GM12878 (cell line): ENCODE measurements at regions of chr5 and their contacts with region 1.

Region 1: DNA sequence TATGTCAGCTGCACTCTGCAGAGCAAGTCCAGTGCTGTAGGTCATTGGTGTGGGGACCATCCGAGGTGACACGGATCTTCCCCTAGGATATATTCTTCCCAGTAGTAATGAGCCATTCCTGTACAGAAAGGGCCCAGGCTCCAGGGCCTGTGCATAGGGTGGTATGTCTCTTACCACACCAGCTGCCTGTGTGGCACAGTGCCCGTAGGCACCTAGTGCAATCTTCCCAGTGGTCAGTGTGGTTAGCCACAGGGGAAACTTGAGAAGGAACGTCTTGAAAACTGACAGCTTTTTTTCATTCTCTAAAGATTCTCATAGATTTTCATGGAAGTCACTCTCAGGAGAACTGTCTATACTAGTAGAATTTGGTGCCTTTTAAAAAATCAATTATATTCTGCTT is 39.8 kb downstream of the CYSTM1 start:
- DNase-seq: no peak
- ATAC-seq: peak; percentile 61
- H3K4me3 ChIP-seq: no peak overlapping the region
- H3K27ac ChIP-seq: no peak overlapping the region
- H3K4me1 ChIP-seq: peaks cover 8% of the 10 kb centered on the region
- H3K27me3 ChIP-seq: no peaks in the 10 kb centered on the region
- CTCF ChIP-seq: no peak
- EP300 ChIP-seq: no peak
- POLR2A ChIP-seq: no peak
- RAD21 ChIP-seq: no peak

Region 2: GRCh38 chr5:139925650-139926640 is 288.9 kb before region 1 on chr5:
- CTCF ChIA-PET with region 1: no interaction called
- POLR2A ChIA-PET with region 1: no interaction called
- RAD21 ChIA-PET with region 1: no interaction called
- SMC1A ChIA-PET with region 1: no interaction called
- in situ Hi-C with region 1: no loop called
- intact Hi-C with region 1: no loop called
- DNase-seq: no peak
- ATAC-seq: peak; percentile 54
- H3K4me3 ChIP-seq: no peak overlapping the region
- H3K27ac ChIP-seq: no peak overlapping the region
- H3K4me1 ChIP-seq: 0 out of 2 replicates have a peak, but pooled peaks cover 6% of the 10 kb centered on the region
- H3K27me3 ChIP-seq: no peaks in the 10 kb centered on the region
- CTCF ChIP-seq: no peak
- EP300 ChIP-seq: no peak
- POLR2A ChIP-seq: no peak
- RAD21 ChIP-seq: no peak

Region 3: GRCh38 chr5:139946440-139946839 is 268.4 kb before region 1 on chr5:
- CTCF ChIA-PET with region 1: no interaction called
- POLR2A ChIA-PET with region 1: no interaction called
- RAD21 ChIA-PET with region 1: no interaction called
- SMC1A ChIA-PET with region 1: no interaction called
- in situ Hi-C with region 1: no loop called
- intact Hi-C with region 1: no loop called
- DNase-seq: no peak
- ATAC-seq: peak; percentile 67
- H3K4me3 ChIP-seq: no peak overlapping the region
- H3K27ac ChIP-seq: no peak overlapping the region
- H3K4me1 ChIP-seq: peaks cover 14% of the 10 kb centered on the region
- H3K27me3 ChIP-seq: no peaks in the 10 kb centered on the region
- CTCF ChIP-seq: no peak
- EP300 ChIP-seq: no peak
- POLR2A ChIP-seq: no peak
- RAD21 ChIP-seq: no peak

Region 4: GRCh38 chr5:140182075-140182709 is 32.6 kb before region 1 on chr5:
- CTCF ChIA-PET with region 1: interaction called, 4 read pairs
- POLR2A ChIA-PET with region 1: interaction called, 3 read pairs
- RAD21 ChIA-PET with region 1: interaction called, 3 read pairs
- SMC1A ChIA-PET with region 1: interaction called, 11 read pairs
- in situ Hi-C with region 1: no loop called
- intact Hi-C with region 1: no loop called
- DNase-seq: no peak
- ATAC-seq: peak; percentile 38
- H3K4me3 ChIP-seq: no peak overlapping the region
- H3K27ac ChIP-seq: no peak overlapping the region
- H3K4me1 ChIP-seq: peaks cover 18% of the 10 kb centered on the region
- H3K27me3 ChIP-seq: no peaks in the 10 kb centered on the region
- CTCF ChIP-seq: no peak
- EP300 ChIP-seq: no peak
- POLR2A ChIP-seq: no peak
- RAD21 ChIP-seq: no peak

Region 5: DNA sequence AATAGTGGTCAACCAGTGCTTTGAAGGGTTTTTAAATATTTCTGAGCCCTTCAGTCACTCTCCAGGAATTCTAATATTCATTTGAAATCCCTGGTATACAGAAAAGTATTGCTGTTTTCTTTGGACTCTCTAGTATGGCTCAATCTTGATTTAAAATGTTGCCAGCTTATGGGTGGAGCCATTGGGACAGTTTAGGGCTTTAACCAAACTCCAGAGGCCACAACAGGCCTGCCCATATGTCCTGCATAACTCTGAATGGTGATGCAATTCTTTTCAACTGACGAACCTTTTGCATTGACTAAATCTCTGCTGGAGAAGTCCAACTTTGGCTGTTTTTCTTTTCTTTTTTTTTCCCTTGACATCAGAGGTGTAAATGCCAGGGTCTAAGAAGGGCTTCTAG is 176.5 kb after region 1 on chr5:
- CTCF ChIA-PET with region 1: no interaction called
- POLR2A ChIA-PET with region 1: no interaction called
- RAD21 ChIA-PET with region 1: no interaction called
- SMC1A ChIA-PET with region 1: no interaction called
- in situ Hi-C with region 1: no loop called
- intact Hi-C with region 1: no loop called
- DNase-seq: no peak
- ATAC-seq: no peak
- H3K4me3 ChIP-seq: no peak overlapping the region
- H3K27ac ChIP-seq: no peak overlapping the region
- H3K4me1 ChIP-seq: no peaks in the 10 kb centered on the region
- H3K27me3 ChIP-seq: no peaks in the 10 kb centered on the region
- CTCF ChIP-seq: no peak
- EP300 ChIP-seq: no peak
- POLR2A ChIP-seq: no peak
- RAD21 ChIP-seq: no peak

Region 6: GRCh38 chr5:140753561-140753960 is 538.7 kb after region 1 on chr5:
- CTCF ChIA-PET with region 1: no interaction called
- POLR2A ChIA-PET with region 1: no interaction called
- RAD21 ChIA-PET with region 1: no interaction called
- SMC1A ChIA-PET with region 1: no interaction called
- in situ Hi-C with region 1: no loop called
- intact Hi-C with region 1: no loop called
- DNase-seq: no peak
- ATAC-seq: no peak
- H3K4me3 ChIP-seq: no peak overlapping the region
- H3K27ac ChIP-seq: no peak overlapping the region
- H3K4me1 ChIP-seq: no peaks in the 10 kb centered on the region
- H3K27me3 ChIP-seq: no peaks in the 10 kb centered on the region
- CTCF ChIP-seq: no peak
- EP300 ChIP-seq: no peak
- POLR2A ChIP-seq: no peak
- RAD21 ChIP-seq: no peak